CD8-positive, alpha-beta memory T cell (primary cell): ENCODE measurements at regions of chr6 and their contacts with region 1.

Region 1: DNA sequence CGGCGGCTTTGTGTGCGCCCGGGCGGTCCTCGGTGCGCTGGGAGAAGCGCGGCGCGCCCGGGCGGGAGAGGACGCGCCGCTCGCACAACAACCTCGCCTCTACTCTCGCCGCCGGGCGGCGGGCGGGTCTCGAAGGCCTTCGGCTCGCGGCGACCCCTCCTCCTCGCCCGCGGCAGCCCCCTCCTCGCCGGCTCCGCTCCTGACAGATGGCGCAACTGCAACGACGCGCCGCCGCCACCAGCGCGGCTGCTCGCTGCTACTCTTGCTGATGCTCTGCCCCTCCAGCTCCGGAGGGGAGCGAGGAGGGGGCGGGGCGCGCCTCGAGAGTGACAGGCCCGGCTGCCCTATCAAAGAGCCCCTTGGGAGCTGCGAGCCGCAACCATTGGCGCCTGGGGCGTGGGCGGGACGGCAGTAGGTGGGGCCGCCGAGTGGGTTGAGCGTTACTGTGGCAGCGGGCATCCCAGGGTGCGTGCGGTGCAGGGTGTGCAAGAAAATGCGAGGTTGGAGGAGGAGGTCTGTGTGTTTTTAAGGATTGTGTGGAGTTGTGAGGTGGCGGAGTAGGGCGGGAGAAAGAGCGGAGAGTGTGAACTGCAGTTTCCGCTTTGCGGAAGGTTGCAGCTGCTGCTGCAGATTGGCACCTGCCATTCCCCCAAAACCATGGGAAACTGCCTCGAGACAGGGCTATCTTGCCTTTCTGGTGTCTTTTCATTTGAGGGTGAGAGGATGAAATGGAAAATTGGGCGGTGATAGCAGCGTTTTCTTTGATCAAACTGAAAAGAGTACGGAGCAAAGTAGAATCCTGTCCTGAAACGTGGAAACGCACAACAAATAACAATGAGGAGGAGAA is at the start of gene FYN:
- DNase-seq: peak; percentile 97 to 99 (median 98)
- H3K4me3 ChIP-seq: peak within 1 kb of the TSS; percentile 88
- H3K4me3 Mint-ChIP-seq: peak within 1 kb of the TSS; percentile 94 to 99 (median 98)
- H3K27ac ChIP-seq: peak within 1 kb of the TSS; percentile 85
- H3K27ac Mint-ChIP-seq: peak within 1 kb of the TSS; percentile 89 to 99 (median 97)
- H3K4me1 ChIP-seq: peaks cover 35% of the 10 kb centered on the region
- H3K4me1 Mint-ChIP-seq: peaks cover 39 to 45% (median 43%) of the 10 kb centered on the region in 3 donors
- H3K27me3 ChIP-seq: no peaks in the 10 kb centered on the region
- H3K27me3 Mint-ChIP-seq: no peaks in the 10 kb centered on the region
- total RNA-seq, gene FYN: 481 to 491 TPM

Region 2: DNA sequence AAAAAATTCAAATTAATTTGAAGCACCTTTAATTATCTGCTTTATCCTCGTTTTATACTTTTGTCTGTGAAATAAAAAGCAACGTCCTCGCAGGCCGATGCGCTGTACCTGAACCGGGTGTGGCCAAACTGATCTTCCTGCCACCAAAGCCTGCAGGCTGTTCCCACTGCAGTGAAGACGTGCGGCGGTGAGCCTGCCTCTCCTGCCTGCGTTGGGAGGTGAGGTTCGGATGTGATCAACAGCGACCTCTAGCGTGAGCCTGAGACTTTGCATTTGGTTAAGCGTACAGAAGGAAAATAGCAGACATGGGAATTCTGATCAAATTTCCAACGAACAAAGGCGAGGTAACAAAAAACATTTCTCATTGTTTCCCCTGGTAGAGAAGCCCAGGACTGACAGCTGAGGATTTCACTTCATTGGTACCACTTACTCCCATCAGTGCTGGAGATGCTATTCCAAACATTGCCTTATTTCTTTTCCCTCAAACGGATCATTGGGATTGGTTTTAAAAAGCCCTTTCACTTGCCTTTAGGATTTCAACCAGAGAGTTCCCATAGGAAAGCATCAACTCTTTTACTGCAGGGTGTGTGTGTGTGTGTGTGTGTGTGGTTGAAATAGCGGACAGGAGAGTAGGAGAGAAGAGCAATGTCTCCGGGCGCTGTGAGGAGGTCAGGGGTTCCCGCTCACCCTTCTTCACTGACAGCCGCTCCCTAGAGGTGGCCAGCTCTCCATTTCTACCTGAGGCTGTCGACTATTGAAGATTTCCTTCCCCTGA is 123.9 kb after region 1 on chr6:
- CTCF ChIA-PET with region 1: interaction called, 10 read pairs
- POLR2A ChIA-PET with region 1: no interaction called
- DNase-seq: peak; percentile 72 to 85 (median 76)
- H3K4me3 ChIP-seq: peak overlapping the region; percentile 3
- H3K4me3 Mint-ChIP-seq: peak overlapping the region in 6 of 7 donors; percentile 62 to 80 (median 74)
- H3K27ac ChIP-seq: no peak overlapping the region
- H3K27ac Mint-ChIP-seq: peak overlapping the region in 7 of 8 donors; percentile 43 to 81 (median 67)
- H3K4me1 ChIP-seq: peaks cover 40% of the 10 kb centered on the region
- H3K4me1 Mint-ChIP-seq: peaks cover 36 to 43% (median 39%) of the 10 kb centered on the region in 3 donors
- H3K27me3 ChIP-seq: no peaks in the 10 kb centered on the region
- H3K27me3 Mint-ChIP-seq: peaks cover 0 to 2% of the 10 kb centered on the region in 2 donors

Region 3: DNA sequence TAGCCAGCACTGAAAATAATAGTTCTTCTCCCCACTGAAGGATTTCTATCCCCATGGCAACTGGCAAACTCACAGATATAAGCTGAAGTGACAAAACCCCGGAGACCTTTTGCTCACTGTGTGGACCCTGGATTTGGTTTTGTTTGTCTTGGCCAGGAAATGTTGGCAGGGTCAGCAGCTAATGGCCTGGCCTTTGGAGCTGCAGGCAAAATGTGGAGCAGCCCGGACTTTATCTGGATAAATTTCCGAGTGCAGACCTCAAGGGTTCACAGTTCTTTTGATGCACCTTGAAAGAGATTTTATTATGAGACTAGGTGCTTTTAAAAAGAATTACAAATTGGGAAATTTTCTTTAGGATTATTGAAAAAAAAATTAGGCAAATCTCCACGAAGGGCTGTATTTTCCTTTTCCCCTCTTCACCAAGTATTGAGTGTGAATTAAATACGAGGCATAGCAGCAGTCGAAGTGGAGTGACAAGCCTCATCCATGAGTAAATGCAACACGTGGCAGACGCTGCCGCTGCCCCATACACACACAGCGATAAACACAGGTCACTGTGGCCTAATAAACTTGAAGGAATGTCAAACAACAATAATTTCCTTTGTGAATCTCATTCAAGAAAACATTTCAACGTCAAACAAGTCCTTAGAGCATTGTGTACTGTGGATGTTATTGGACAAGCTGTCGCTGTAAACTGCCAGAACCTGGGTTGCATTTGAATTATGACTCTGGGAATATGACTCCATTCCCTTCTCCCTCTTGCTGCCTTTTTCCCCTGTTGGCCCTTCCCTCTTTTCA is 145.4 kb after region 1 on chr6:
- CTCF ChIA-PET with region 1: no interaction called
- POLR2A ChIA-PET with region 1: no interaction called
- DNase-seq: no peak
- H3K4me3 ChIP-seq: no peak overlapping the region
- H3K4me3 Mint-ChIP-seq: no peak overlapping the region
- H3K27ac ChIP-seq: no peak overlapping the region
- H3K27ac Mint-ChIP-seq: no peak overlapping the region
- H3K4me1 ChIP-seq: no peaks in the 10 kb centered on the region
- H3K4me1 Mint-ChIP-seq: peaks cover 9 to 30% (median 14%) of the 10 kb centered on the region in 3 donors
- H3K27me3 ChIP-seq: no peaks in the 10 kb centered on the region
- H3K27me3 Mint-ChIP-seq: peaks cover 0 to 6% of the 10 kb centered on the region in 2 donors

Region 4: DNA sequence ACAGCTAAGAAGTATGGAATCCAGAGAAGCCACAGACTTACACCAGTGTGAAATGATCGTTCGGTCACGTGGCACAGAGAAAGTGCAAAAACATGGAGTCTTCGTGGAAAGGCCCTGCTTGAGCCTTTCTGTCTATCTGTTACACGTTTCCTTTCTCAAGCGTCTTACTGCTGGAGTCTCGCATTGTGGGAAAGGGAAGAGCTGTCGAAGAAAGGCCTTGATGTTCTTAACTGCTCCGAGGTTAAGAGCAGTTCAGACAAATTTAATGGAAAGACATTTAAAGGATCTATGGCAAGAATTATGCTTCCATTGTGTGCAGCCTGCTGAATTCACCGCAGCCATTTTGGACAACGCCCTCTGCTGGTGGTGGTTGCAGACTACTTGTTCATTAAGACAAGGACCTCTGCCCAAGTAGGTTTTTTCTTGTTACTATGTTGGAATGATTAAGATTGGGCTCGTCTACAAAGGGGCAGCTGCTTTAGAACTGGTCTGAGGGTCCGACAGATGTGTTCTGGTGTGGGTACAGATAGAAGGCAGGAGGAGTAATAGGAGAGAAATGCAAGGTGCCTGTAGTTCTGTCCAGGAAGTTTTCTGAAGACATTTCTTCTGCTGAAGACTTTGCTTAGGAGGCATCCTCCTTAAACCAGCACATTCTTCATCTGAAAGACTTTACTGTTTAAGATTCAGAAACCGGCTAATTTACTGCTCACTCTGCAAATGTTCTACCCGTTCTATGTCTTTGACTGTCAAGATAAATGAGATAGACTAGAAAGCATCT is 155.8 kb after region 1 on chr6:
- CTCF ChIA-PET with region 1: interaction called, 10 read pairs
- POLR2A ChIA-PET with region 1: no interaction called
- DNase-seq: peak; percentile 32 to 68 (median 46)
- H3K4me3 ChIP-seq: peak overlapping the region; percentile 16
- H3K4me3 Mint-ChIP-seq: peak overlapping the region in 6 of 7 donors; percentile 17 to 73 (median 66)
- H3K27ac ChIP-seq: no peak overlapping the region
- H3K27ac Mint-ChIP-seq: peak overlapping the region; percentile 79 to 96 (median 93)
- H3K4me1 ChIP-seq: peaks cover 69% of the 10 kb centered on the region
- H3K4me1 Mint-ChIP-seq: peaks cover 47 to 72% (median 65%) of the 10 kb centered on the region in 3 donors
- H3K27me3 ChIP-seq: no peaks in the 10 kb centered on the region
- H3K27me3 Mint-ChIP-seq: peaks cover 0 to 2% of the 10 kb centered on the region in 2 donors